Naive thymus-derived CD8-positive, alpha-beta T cell (primary cell): ENCODE measurements at regions of chr19 and their contacts with region 1.

Region 1: GRCh38 chr19:49850473-49851342 is at the start of gene PTOV1:
- DNase-seq: peak; percentile 82 to 93 (median 88)
- ATAC-seq: peak; percentile 74 to 89
- H3K4me3 Mint-ChIP-seq: peak within 1 kb of the TSS; percentile 88 to 97 (median 92)
- H3K27ac Mint-ChIP-seq: peak within 1 kb of the TSS; percentile 83 to 99 (median 97)
- H3K4me1 Mint-ChIP-seq: peaks cover 19 to 44% (median 31%) of the 10 kb centered on the region in 4 donors
- H3K27me3 Mint-ChIP-seq: no peaks in the 10 kb centered on the region
- polyA plus RNA-seq, gene PTOV1: 42.9 to 67.4 (median 50.9) TPM

Region 2: GRCh38 chr19:49718511-49718910 is 132.2 kb before region 1 on chr19:
- POLR2A ChIA-PET with region 1: interaction called, 16 read pairs
- DNase-seq: no peak
- ATAC-seq: no peak
- H3K4me3 Mint-ChIP-seq: peak overlapping the region; percentile 52 to 97 (median 80)
- H3K27ac Mint-ChIP-seq: peak overlapping the region; percentile 60 to 100 (median 98)
- H3K4me1 Mint-ChIP-seq: peaks cover 6 to 32% (median 10%) of the 10 kb centered on the region in 4 donors
- H3K27me3 Mint-ChIP-seq: no peaks in the 10 kb centered on the region

Region 3: GRCh38 chr19:49766007-49766937 is 84.4 kb before region 1 on chr19:
- POLR2A ChIA-PET with region 1: interaction called, 13 read pairs
- DNase-seq: peak; percentile 95 to 100 (median 99)
- ATAC-seq: peak; percentile 88 to 90
- H3K4me3 Mint-ChIP-seq: peak overlapping the region; percentile 77 to 96 (median 92)
- H3K27ac Mint-ChIP-seq: peak overlapping the region; percentile 87 to 97 (median 96)
- H3K4me1 Mint-ChIP-seq: peaks cover 31 to 42% (median 36%) of the 10 kb centered on the region in 4 donors
- H3K27me3 Mint-ChIP-seq: peaks cover 0 to 4% (median 0%) of the 10 kb centered on the region in 5 donors

Region 4: DNA sequence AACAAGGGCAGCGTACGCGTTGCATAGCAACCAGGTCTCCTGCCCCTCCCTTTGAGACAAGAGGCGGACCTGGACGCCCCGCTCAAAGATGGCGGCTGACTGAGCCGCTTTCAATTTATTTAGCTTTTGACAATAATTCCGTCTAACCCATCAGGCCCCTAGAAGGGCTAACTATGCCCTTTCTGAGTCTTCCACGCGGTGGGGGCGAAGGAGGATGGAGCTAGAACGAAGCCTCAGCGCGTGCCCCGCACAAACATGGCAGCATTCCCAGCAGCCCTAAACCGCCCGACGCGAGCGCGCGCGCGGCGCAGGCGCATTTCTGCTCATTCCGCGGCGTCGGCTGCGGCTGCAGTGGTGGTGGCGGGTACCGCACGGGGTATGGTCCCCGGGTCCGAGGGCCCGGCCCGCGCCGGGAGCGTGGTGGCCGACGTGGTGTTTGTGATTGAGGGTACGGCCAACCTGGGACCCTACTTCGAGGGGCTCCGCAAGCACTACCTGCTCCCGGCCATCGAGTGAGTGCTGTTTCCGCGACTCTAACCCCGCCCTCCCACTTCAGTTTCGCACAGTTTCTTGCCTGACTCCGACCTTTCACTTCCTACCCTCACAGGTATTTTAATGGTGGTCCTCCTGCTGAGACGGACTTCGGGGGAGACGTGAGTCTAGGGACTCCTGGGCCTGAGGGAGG is 32.6 kb before region 1 on chr19 and contains the start of gene MED25:
- POLR2A ChIA-PET with region 1: interaction called, 24 read pairs
- DNase-seq: peak; percentile 81 to 98 (median 89)
- ATAC-seq: peak; percentile 55
- H3K4me3 Mint-ChIP-seq: peak within 1 kb of the TSS; percentile 94 to 100 (median 99)
- H3K27ac Mint-ChIP-seq: peak within 1 kb of the TSS; percentile 98 to 100 (median 100)
- H3K4me1 Mint-ChIP-seq: peaks cover 11 to 40% (median 32%) of the 10 kb centered on the region in 4 donors
- H3K27me3 Mint-ChIP-seq: peaks cover 0 to 2% (median 0%) of the 10 kb centered on the region in 5 donors
- polyA plus RNA-seq, gene MED25: 7.5 to 19.2 (median 13.1) TPM

Region 5: DNA sequence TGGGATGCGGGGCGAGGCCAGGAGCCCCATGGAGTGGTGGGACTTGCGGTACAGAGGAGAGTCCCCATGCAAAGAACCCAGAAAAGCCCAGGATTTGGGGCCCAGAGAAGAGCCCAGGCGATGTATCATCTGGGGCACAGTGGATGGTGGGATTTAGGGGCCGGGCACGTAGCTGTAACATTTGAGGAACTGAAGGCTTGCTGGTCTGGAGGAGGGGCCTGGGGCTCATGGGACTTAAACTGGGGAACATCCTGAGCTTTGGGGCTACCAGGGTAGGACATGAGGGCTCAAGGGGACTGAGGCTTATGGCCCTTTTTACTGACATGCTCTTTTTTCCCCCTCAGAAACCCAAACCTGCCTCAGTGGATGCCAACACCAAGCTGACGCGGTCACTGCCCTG is 19.1 kb before region 1 on chr19:
- POLR2A ChIA-PET with region 1: no interaction called
- DNase-seq: no peak
- ATAC-seq: no peak
- H3K4me3 Mint-ChIP-seq: no peak overlapping the region
- H3K27ac Mint-ChIP-seq: peak overlapping the region in 1 of 10 donors; percentile 37
- H3K4me1 Mint-ChIP-seq: peaks cover 2 to 9% (median 2%) of the 10 kb centered on the region in 4 donors
- H3K27me3 Mint-ChIP-seq: no peaks in the 10 kb centered on the region

Region 6: GRCh38 chr19:49869441-49870176 is 18.9 kb after region 1 on chr19:
- POLR2A ChIA-PET with region 1: interaction called, 137 read pairs
- DNase-seq: peak; percentile 77 to 97 (median 89)
- ATAC-seq: peak; percentile 77
- H3K4me3 Mint-ChIP-seq: peak overlapping the region in 1 of 10 donors; percentile 85
- H3K27ac Mint-ChIP-seq: peak overlapping the region in 2 of 10 donors; percentile 89 to 92
- H3K4me1 Mint-ChIP-seq: peaks cover 14 to 53% (median 50%) of the 10 kb centered on the region in 4 donors
- H3K27me3 Mint-ChIP-seq: no peaks in the 10 kb centered on the region

Region 7: GRCh38 chr19:50003810-50004419 is 153.2 kb after region 1 on chr19:
- POLR2A ChIA-PET with region 1: no interaction called
- DNase-seq: no peak
- ATAC-seq: no peak
- H3K4me3 Mint-ChIP-seq: peak overlapping the region in 1 of 10 donors; percentile 50
- H3K27ac Mint-ChIP-seq: peak overlapping the region in 2 of 10 donors; percentile 20 to 73
- H3K4me1 Mint-ChIP-seq: peaks cover 6 to 27% (median 15%) of the 10 kb centered on the region in 4 donors
- H3K27me3 Mint-ChIP-seq: no peaks in the 10 kb centered on the region